ENCODE measurements at regions of chr15 and their contacts with region 1.

Region 1: GRCh38 chr15:100873029-100873677 is 6.5 kb upstream of the ALDH1A3 start:
- DNase-seq: peak; percentile 55 to 62 (median 62)
- ATAC-seq: peak; percentile 81
- H3K4me3 ChIP-seq: no peak overlapping the region
- H3K27ac ChIP-seq: no peak overlapping the region
- H3K4me1 ChIP-seq: no peaks in the 10 kb centered on the region
- H3K27me3 ChIP-seq: peaks cover 0 to 10% of the 10 kb centered on the region in 2 experiments; a peak in 2 of 5 replicates
- CTCF ChIP-seq: peak; percentile 63 to 80 (median 74)
- EP300 ChIP-seq: no peak
- POLR2A ChIP-seq: no peak
- RAD21 ChIP-seq: peak; percentile 53 to 76

Region 2: DNA sequence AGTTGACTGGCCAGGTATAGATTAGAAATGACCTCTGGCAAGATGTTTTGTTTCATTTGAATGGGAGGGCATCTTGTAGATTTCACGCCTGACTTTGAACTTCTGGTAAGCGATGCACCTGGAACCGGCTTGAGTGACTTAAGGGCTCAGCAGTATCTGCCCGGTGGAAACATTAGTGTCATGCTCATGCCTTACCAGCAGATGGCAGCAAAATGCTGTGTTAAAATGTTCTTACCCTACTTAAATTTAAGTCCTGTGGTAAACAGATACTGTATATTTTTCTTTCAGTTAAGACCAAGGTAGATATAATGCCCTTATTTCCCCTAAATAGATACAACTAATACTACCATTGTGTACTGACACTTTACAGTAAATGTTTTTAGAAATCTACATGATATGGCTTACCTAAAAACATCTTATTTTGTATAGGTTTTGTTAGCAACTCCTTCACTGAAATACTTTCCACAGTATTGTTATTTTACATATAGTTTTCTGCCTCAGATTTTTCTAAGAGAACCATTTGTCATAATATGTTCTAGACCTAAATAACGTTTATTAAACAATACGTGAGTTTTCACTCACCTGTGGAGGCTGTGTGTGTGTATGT is 245.3 kb before region 1 on chr15:
- CTCF ChIA-PET with region 1: interaction called, 15 read pairs
- POLR2A ChIA-PET with region 1: no interaction called
- in situ Hi-C with region 1: no loop called
- intact Hi-C with region 1: loop called (anchors 1 kb)
- DNase-seq: peak; percentile 61 to 73 (median 68)
- ATAC-seq: peak; percentile 94
- H3K4me3 ChIP-seq: no peak overlapping the region
- H3K27ac ChIP-seq: no peak overlapping the region
- H3K4me1 ChIP-seq: no peaks in the 10 kb centered on the region; a peak in 1 of 5 replicates
- H3K27me3 ChIP-seq: no peaks in the 10 kb centered on the region
- CTCF ChIP-seq: peak; percentile 55 to 85 (median 78)
- EP300 ChIP-seq: no peak
- POLR2A ChIP-seq: no peak
- RAD21 ChIP-seq: peak; percentile 63 to 74

Region 3: GRCh38 chr15:100635406-100636071 is 237.6 kb before region 1 on chr15:
- CTCF ChIA-PET with region 1: no interaction called
- POLR2A ChIA-PET with region 1: no interaction called
- in situ Hi-C with region 1: loop called (anchors 5 kb)
- intact Hi-C with region 1: no loop called
- DNase-seq: no peak
- ATAC-seq: no peak
- H3K4me3 ChIP-seq: no peak overlapping the region
- H3K27ac ChIP-seq: no peak overlapping the region
- H3K4me1 ChIP-seq: no peaks in the 10 kb centered on the region; a peak in 1 of 5 replicates
- H3K27me3 ChIP-seq: no peaks in the 10 kb centered on the region
- CTCF ChIP-seq: no peak
- EP300 ChIP-seq: no peak
- POLR2A ChIP-seq: no peak
- RAD21 ChIP-seq: no peak

Region 4: GRCh38 chr15:100671858-100672543 is 201.2 kb before region 1 on chr15:
- CTCF ChIA-PET with region 1: no interaction called
- POLR2A ChIA-PET with region 1: no interaction called
- in situ Hi-C with region 1: no loop called
- intact Hi-C with region 1: loop called (anchors 1 kb)
- DNase-seq: peak; percentile 28 to 63 (median 42)
- ATAC-seq: peak; percentile 98
- H3K4me3 ChIP-seq: no peak overlapping the region
- H3K27ac ChIP-seq: no peak overlapping the region
- H3K4me1 ChIP-seq: no peaks in the 10 kb centered on the region
- H3K27me3 ChIP-seq: peaks cover 28 to 40% of the 10 kb centered on the region in 2 experiments; a peak in 4 of 5 replicates
- CTCF ChIP-seq: peak; percentile 72 to 80 (median 75)
- EP300 ChIP-seq: no peak
- POLR2A ChIP-seq: no peak
- RAD21 ChIP-seq: peak; percentile 52 to 79

Region 5: GRCh38 chr15:101568309-101568708 is 695.2 kb after region 1 on chr15:
- CTCF ChIA-PET with region 1: no interaction called
- POLR2A ChIA-PET with region 1: no interaction called
- in situ Hi-C with region 1: no loop called
- intact Hi-C with region 1: no loop called
- DNase-seq: no peak
- ATAC-seq: no peak
- H3K4me3 ChIP-seq: no peak overlapping the region
- H3K27ac ChIP-seq: no peak overlapping the region
- H3K4me1 ChIP-seq: no peaks in the 10 kb centered on the region
- H3K27me3 ChIP-seq: peaks cover 38 to 61% of the 10 kb centered on the region in 2 experiments
- CTCF ChIP-seq: no peak
- EP300 ChIP-seq: no peak
- POLR2A ChIP-seq: no peak
- RAD21 ChIP-seq: no peak